ENCODE measurements at regions of chr13 and their contacts with region 1.

Region 1: GRCh38 chr13:95480131-95480545 is 72.4 kb upstream of the CLDN10 start:
- DNase-seq: no peak
- ATAC-seq: no peak
- H3K4me3 ChIP-seq: no peak overlapping the region
- H3K27ac ChIP-seq: no peak overlapping the region
- H3K4me1 ChIP-seq: peaks cover 3 to 12% of the 10 kb centered on the region in 2 experiments; a peak in 3 of 4 replicates
- H3K27me3 ChIP-seq: no peaks in the 10 kb centered on the region
- CTCF ChIP-seq: no peak
- POLR2A ChIP-seq: no peak
- RAD21 ChIP-seq: no peak

Region 2: GRCh38 chr13:94335761-94336526 is 1144.2 kb before region 1 on chr13:
- CTCF ChIA-PET with region 1: no interaction called
- POLR2A ChIA-PET with region 1: no interaction called
- RAD21 ChIA-PET with region 1: no interaction called
- intact Hi-C with region 1: no loop called
- DNase-seq: no peak
- ATAC-seq: no peak
- H3K4me3 ChIP-seq: no peak overlapping the region
- H3K27ac ChIP-seq: no peak overlapping the region
- H3K4me1 ChIP-seq: no peaks in the 10 kb centered on the region
- H3K27me3 ChIP-seq: no peaks in the 10 kb centered on the region
- CTCF ChIP-seq: no peak
- POLR2A ChIP-seq: no peak
- RAD21 ChIP-seq: no peak

Region 3: GRCh38 chr13:94674609-94675348 is 805.4 kb before region 1 on chr13:
- CTCF ChIA-PET with region 1: no interaction called
- POLR2A ChIA-PET with region 1: no interaction called
- RAD21 ChIA-PET with region 1: no interaction called
- intact Hi-C with region 1: loop called (anchors 2 kb)
- DNase-seq: peak; percentile 54
- ATAC-seq: peak; percentile 92
- H3K4me3 ChIP-seq: no peak overlapping the region
- H3K27ac ChIP-seq: no peak overlapping the region
- H3K4me1 ChIP-seq: no peaks in the 10 kb centered on the region
- H3K27me3 ChIP-seq: peaks cover 21% of the 10 kb centered on the region; the same call in 1 of the 2 replicates
- CTCF ChIP-seq: peak; percentile 36 to 80 (median 72); a peak in 5 of 6 replicates
- POLR2A ChIP-seq: no peak
- RAD21 ChIP-seq: peak; percentile 63

Region 4: GRCh38 chr13:95191821-95192563 is 288.1 kb before region 1 on chr13:
- CTCF ChIA-PET with region 1: interaction called, 8 read pairs
- POLR2A ChIA-PET with region 1: no interaction called
- RAD21 ChIA-PET with region 1: no interaction called
- intact Hi-C with region 1: loop called (anchors 1 kb)
- DNase-seq: peak; percentile 45
- ATAC-seq: peak; percentile 99
- H3K4me3 ChIP-seq: no peak overlapping the region
- H3K27ac ChIP-seq: no peak overlapping the region
- H3K4me1 ChIP-seq: no peaks in the 10 kb centered on the region
- H3K27me3 ChIP-seq: no peaks in the 10 kb centered on the region
- CTCF ChIP-seq: peak; percentile 80 to 97 (median 94)
- POLR2A ChIP-seq: no peak
- RAD21 ChIP-seq: peak; percentile 91

Region 5: GRCh38 chr13:95982144-95982543 is 502.0 kb after region 1 on chr13:
- CTCF ChIA-PET with region 1: no interaction called
- POLR2A ChIA-PET with region 1: no interaction called
- RAD21 ChIA-PET with region 1: no interaction called
- intact Hi-C with region 1: no loop called
- DNase-seq: no peak
- ATAC-seq: no peak
- H3K4me3 ChIP-seq: no peak overlapping the region
- H3K27ac ChIP-seq: no peak overlapping the region
- H3K4me1 ChIP-seq: no peaks in the 10 kb centered on the region
- H3K27me3 ChIP-seq: no peaks in the 10 kb centered on the region
- CTCF ChIP-seq: no peak
- POLR2A ChIP-seq: no peak
- RAD21 ChIP-seq: no peak

Region 6: GRCh38 chr13:96214824-96215445 is 734.8 kb after region 1 on chr13:
- CTCF ChIA-PET with region 1: no interaction called
- POLR2A ChIA-PET with region 1: no interaction called
- RAD21 ChIA-PET with region 1: no interaction called
- intact Hi-C with region 1: no loop called
- DNase-seq: no peak
- ATAC-seq: no peak
- H3K4me3 ChIP-seq: no peak overlapping the region
- H3K27ac ChIP-seq: no peak overlapping the region
- H3K4me1 ChIP-seq: no peaks in the 10 kb centered on the region
- H3K27me3 ChIP-seq: peaks cover 6% of the 10 kb centered on the region
- CTCF ChIP-seq: no peak
- POLR2A ChIP-seq: no peak
- RAD21 ChIP-seq: no peak

Measured in HCT116 (cell line).